Left colon (tissue), 2 donors: ENCODE measurements at regions of chr19 and their contacts with region 1.

Region 1: DNA sequence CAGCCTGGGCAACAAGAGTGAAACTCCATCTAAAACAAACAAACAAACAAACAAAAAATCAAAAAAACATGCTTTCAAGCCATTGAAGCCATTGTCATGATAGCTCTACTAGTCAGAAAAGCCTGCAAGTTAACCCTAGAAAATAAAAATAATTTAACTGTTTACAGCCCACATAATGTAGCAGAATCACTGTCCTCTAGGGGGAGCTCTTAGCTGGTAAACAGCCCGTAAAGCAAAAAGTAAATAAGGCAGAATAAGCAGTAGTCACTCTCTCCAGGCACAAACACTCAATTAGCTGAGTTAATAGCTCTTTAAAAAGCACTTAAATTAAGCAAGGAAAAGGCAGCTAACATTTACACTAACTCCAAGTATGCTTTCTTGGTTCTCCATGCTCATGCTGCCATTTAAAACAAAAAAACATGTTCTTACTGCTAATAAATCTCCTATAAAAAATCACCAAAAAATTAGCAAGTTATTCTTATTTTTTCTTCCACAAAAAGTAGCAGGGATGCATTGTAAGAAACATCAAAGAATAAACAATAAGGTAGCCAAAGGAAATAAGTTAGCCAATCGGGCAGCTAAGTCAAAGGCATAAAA is 11.3 kb downstream of the LILRB4 start:
- DNase-seq: no peak
- ATAC-seq: no peak

Region 2: DNA sequence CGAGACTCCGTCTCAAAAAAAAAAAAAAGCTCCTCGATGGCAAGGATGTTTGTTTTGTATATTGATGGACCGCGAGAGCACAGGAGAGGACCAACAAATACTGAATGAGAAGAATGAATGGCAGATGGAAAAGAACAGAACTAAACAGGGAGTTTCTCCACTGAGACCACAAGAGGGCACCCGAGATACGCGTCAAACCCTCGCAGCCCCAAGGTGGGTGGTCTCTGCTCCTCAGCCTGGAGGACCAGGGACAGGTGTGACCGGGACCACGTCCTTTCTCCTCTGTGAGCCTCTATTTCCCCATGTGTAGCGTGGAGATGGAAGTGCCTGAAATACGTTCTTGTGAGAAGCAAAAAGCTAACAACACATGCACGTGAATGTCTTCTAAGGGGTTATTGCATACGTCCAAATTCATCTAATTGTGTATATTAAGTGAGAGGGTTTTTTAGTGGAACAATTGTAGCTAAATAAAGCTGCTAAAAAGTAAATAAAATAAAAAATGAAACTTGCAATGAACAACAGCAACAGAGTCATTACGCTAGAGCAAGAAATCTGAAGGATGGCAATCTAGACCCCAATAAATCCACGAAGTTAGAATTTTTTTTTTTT is 192.7 kb before region 1 on chr19:
- intact Hi-C with region 1: loop called in 1 of 2 experiments (anchors 10 kb)
- DNase-seq: no peak
- ATAC-seq: peak; percentile 35